GM12878 (cell line): ENCODE measurements at regions of chr6 and their contacts with region 1.

Region 1: GRCh38 chr6:105431226-105431625 is 28.3 kb upstream of the PREP start:
- DNase-seq: no peak
- ATAC-seq: peak; percentile 65
- H3K4me3 ChIP-seq: no peak overlapping the region
- H3K27ac ChIP-seq: no peak overlapping the region
- H3K4me1 ChIP-seq: peaks cover 3% of the 10 kb centered on the region
- H3K27me3 ChIP-seq: no peaks in the 10 kb centered on the region
- CTCF ChIP-seq: peak; percentile 47 to 58 (median 57); a peak in 5 of 6 replicates
- EP300 ChIP-seq: no peak
- POLR2A ChIP-seq: no peak
- RAD21 ChIP-seq: peak; percentile 81

Region 2: GRCh38 chr6:104987218-104987617 is 444.0 kb before region 1 on chr6:
- CTCF ChIA-PET with region 1: no interaction called
- POLR2A ChIA-PET with region 1: no interaction called
- RAD21 ChIA-PET with region 1: no interaction called
- SMC1A ChIA-PET with region 1: no interaction called
- in situ Hi-C with region 1: no loop called
- intact Hi-C with region 1: no loop called
- DNase-seq: no peak
- ATAC-seq: no peak
- H3K4me3 ChIP-seq: no peak overlapping the region
- H3K27ac ChIP-seq: no peak overlapping the region
- H3K4me1 ChIP-seq: no peaks in the 10 kb centered on the region
- H3K27me3 ChIP-seq: no peaks in the 10 kb centered on the region
- CTCF ChIP-seq: no peak
- EP300 ChIP-seq: no peak
- POLR2A ChIP-seq: no peak
- RAD21 ChIP-seq: no peak

Region 3: GRCh38 chr6:105384008-105384407 is 47.2 kb before region 1 on chr6:
- CTCF ChIA-PET with region 1: no interaction called
- POLR2A ChIA-PET with region 1: no interaction called
- RAD21 ChIA-PET with region 1: no interaction called
- SMC1A ChIA-PET with region 1: no interaction called
- in situ Hi-C with region 1: no loop called
- intact Hi-C with region 1: no loop called
- DNase-seq: no peak
- ATAC-seq: no peak
- H3K4me3 ChIP-seq: no peak overlapping the region
- H3K27ac ChIP-seq: no peak overlapping the region
- H3K4me1 ChIP-seq: no peaks in the 10 kb centered on the region
- H3K27me3 ChIP-seq: no peaks in the 10 kb centered on the region
- CTCF ChIP-seq: no peak
- EP300 ChIP-seq: no peak
- POLR2A ChIP-seq: no peak
- RAD21 ChIP-seq: no peak

Region 4: GRCh38 chr6:105402939-105403935 is 28.0 kb before region 1 on chr6 and contains the start of gene PREP:
- CTCF ChIA-PET with region 1: interaction called, 7 read pairs
- POLR2A ChIA-PET with region 1: no interaction called
- RAD21 ChIA-PET with region 1: interaction called, 11 read pairs
- SMC1A ChIA-PET with region 1: interaction called, 12 read pairs
- in situ Hi-C with region 1: no loop called
- intact Hi-C with region 1: no loop called
- DNase-seq: peak; percentile 28
- ATAC-seq: peak; percentile 94
- H3K4me3 ChIP-seq: peak within 1 kb of the TSS; percentile 100
- H3K27ac ChIP-seq: peak within 1 kb of the TSS; percentile 56
- H3K4me1 ChIP-seq: peaks cover 2% of the 10 kb centered on the region; the same call in 1 of the 2 replicates
- H3K27me3 ChIP-seq: no peaks in the 10 kb centered on the region; a peak in 1 of 4 replicates
- CTCF ChIP-seq: peak; percentile 71 to 88 (median 81)
- EP300 ChIP-seq: no peak
- POLR2A ChIP-seq: peak; percentile 81
- RAD21 ChIP-seq: peak; percentile 48
- polyA plus RNA-seq, gene PREP: 6.5 to 9.9 TPM

Region 5: DNA sequence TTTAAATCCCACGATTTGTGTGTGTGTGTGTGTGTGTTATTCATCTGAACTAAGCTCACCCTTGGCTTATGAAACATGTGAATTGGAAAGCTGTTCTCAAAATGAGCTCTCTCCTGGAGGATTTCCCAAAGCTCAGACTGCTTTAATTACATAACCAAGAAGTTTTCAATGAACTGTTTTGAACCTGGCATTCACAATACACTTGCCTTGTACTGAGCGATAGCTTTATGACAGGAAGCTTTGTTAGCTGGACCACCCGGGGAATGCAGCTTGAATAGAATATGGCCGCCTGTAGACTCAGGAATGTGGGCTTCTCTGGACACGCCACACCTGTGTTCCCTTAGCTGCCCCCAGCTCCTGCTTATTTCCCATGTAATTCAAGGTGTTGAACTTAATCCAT is 43.0 kb after region 1 on chr6:
- CTCF ChIA-PET with region 1: interaction called, 5 read pairs
- POLR2A ChIA-PET with region 1: no interaction called
- RAD21 ChIA-PET with region 1: interaction called, 6 read pairs
- SMC1A ChIA-PET with region 1: interaction called, 12 read pairs
- in situ Hi-C with region 1: no loop called
- intact Hi-C with region 1: no loop called
- DNase-seq: no peak
- ATAC-seq: no peak
- H3K4me3 ChIP-seq: no peak overlapping the region
- H3K27ac ChIP-seq: no peak overlapping the region
- H3K4me1 ChIP-seq: no peaks in the 10 kb centered on the region; the same call in 1 of the 2 replicates
- H3K27me3 ChIP-seq: no peaks in the 10 kb centered on the region
- CTCF ChIP-seq: no peak
- EP300 ChIP-seq: no peak
- POLR2A ChIP-seq: no peak
- RAD21 ChIP-seq: no peak

Region 6: GRCh38 chr6:105646391-105646867 is 215.2 kb after region 1 on chr6:
- CTCF ChIA-PET with region 1: interaction called, 11 read pairs
- POLR2A ChIA-PET with region 1: no interaction called
- RAD21 ChIA-PET with region 1: interaction called, 37 read pairs
- SMC1A ChIA-PET with region 1: interaction called, 38 read pairs
- in situ Hi-C with region 1: no loop called
- intact Hi-C with region 1: loop called (anchors 5 kb)
- DNase-seq: peak; percentile 100
- ATAC-seq: peak; percentile 91
- H3K4me3 ChIP-seq: 0 out of 2 replicates have a peak overlapping the region, but pooled peaks have one; percentile 22
- H3K27ac ChIP-seq: peak overlapping the region; percentile 72
- H3K4me1 ChIP-seq: peaks cover 51% of the 10 kb centered on the region
- H3K27me3 ChIP-seq: no peaks in the 10 kb centered on the region; a peak in 1 of 4 replicates
- CTCF ChIP-seq: no peak
- EP300 ChIP-seq: peak; percentile 100
- POLR2A ChIP-seq: 0 out of 2 replicates have a peak, but pooled peaks have one; percentile 25
- RAD21 ChIP-seq: peak; percentile 32; the same call in 1 of the 2 replicates

Region 7: DNA sequence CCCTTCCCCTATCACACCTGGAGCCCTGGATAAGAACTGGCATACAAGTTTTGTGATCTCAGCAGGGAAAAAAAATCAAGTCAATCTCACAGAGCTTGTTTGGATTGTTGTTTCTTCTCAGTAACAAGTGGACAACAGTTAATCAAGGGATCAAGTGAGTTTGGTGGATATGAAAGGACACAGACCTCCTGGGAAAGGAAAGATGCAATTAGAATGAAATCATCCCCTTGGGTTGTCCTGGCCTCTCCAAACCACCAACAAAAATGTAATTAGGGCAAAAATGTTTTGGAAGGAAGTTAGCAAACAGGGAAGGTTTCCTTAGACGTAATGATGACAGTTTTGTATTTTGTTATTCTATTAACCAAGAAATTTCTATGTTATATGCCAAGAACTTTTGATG is 555.8 kb after region 1 on chr6:
- CTCF ChIA-PET with region 1: interaction called, 8 read pairs
- POLR2A ChIA-PET with region 1: no interaction called
- RAD21 ChIA-PET with region 1: interaction called, 5 read pairs
- SMC1A ChIA-PET with region 1: interaction called, 11 read pairs
- in situ Hi-C with region 1: no loop called
- intact Hi-C with region 1: no loop called
- DNase-seq: no peak
- ATAC-seq: no peak
- H3K4me3 ChIP-seq: no peak overlapping the region
- H3K27ac ChIP-seq: no peak overlapping the region
- H3K4me1 ChIP-seq: no peaks in the 10 kb centered on the region
- H3K27me3 ChIP-seq: peaks cover 6 to 17% of the 10 kb centered on the region in 2 experiments
- CTCF ChIP-seq: no peak
- EP300 ChIP-seq: no peak
- POLR2A ChIP-seq: no peak
- RAD21 ChIP-seq: no peak

Region 8: DNA sequence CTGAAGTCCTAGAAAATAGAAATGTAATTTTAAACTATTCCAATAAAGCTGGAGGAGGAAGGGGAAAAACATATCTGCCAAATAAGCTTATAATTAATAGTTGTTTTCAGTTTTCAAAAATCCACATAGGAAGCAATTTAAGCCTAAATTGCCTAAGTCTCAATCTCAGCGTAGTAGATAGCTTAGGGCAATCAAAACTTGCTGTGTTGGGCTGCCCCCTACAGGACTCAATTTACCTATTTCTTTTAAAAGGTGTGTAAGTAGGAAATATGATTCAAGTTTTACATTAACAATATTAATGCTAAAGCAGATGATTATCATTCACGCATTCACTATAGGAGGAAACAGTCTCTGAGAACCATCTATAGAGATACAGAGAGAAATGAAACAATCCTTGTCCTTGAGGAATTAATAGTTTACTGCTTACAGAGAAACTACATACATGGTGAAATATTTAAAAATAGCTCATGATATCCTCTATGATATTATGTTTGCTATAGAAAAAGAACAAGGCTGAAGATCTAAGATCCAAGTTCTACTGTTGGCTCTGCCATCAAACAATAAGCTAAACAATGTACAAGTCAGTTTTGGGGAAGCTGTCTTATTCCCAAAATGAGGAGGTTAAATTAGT is 792.2 kb after region 1 on chr6:
- CTCF ChIA-PET with region 1: interaction called, 118 read pairs
- POLR2A ChIA-PET with region 1: no interaction called
- RAD21 ChIA-PET with region 1: interaction called, 102 read pairs
- SMC1A ChIA-PET with region 1: interaction called, 134 read pairs
- in situ Hi-C with region 1: no loop called
- intact Hi-C with region 1: loop called (anchors 2 kb)
- DNase-seq: peak; percentile 52
- ATAC-seq: peak; percentile 91
- H3K4me3 ChIP-seq: no peak overlapping the region
- H3K27ac ChIP-seq: no peak overlapping the region
- H3K4me1 ChIP-seq: peaks cover 14% of the 10 kb centered on the region
- H3K27me3 ChIP-seq: no peaks in the 10 kb centered on the region
- CTCF ChIP-seq: peak; percentile 50 to 79 (median 53); a peak in 4 of 6 replicates
- EP300 ChIP-seq: no peak
- POLR2A ChIP-seq: no peak
- RAD21 ChIP-seq: peak; percentile 97